ENCODE measurements at regions of chr13 and their contacts with region 1.

Region 1: GRCh38 chr13:99501184-99501847 is at the start of gene TM9SF2:
- DNase-seq: peak; percentile 98 to 99
- ATAC-seq: peak; percentile 92
- H3K4me3 ChIP-seq: peak within 1 kb of the TSS; percentile 78 to 84
- H3K27ac ChIP-seq: peak within 1 kb of the TSS in 1 of 2 donors; percentile 60
- H3K4me1 ChIP-seq: peaks cover 2 to 3% of the 10 kb centered on the region in 2 donors
- H3K27me3 ChIP-seq: no peaks in the 10 kb centered on the region
- total RNA-seq, gene TM9SF2: 74.5 to 93.3 TPM

Region 2: DNA sequence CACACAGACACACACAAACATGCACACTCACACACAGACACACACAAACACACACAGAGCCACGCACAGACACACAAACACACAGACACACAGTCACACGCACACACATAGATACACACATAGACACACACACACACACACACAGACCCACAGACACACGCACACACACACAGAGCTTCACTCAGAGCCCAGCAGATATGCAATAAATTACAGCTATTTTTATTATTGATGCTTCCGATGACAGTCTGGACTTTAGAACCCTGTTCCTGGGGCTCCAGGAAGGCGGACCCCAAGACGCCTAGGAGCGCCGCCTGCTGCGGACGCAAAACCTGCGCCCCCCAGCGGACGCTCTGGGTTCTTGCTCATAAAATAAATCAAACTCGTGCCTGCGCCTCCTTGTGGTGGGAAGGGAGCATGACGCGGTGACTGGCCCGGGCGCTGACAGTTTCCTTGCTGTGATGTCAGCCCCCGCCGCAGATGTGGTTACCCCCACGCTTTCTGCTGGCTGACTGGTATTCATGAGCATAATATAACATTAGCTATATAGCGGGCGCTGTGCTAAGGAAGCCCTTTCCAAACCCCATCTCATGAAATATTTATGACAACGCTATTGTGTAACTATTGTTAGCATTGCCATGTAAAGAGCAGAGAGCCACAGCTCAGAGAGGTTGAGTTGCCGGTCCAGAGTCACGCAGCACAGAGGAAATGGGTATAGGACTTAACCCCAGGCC is 64.5 kb before region 1 on chr13:
- intact Hi-C with region 1: loop called (anchors 5 kb)
- DNase-seq: peak; percentile 91 to 95
- ATAC-seq: peak; percentile 85
- H3K4me3 ChIP-seq: no peak overlapping the region
- H3K27ac ChIP-seq: no peak overlapping the region
- H3K4me1 ChIP-seq: no peaks in the 10 kb centered on the region
- H3K27me3 ChIP-seq: no peaks in the 10 kb centered on the region

Region 3: GRCh38 chr13:99442273-99442895 is 58.9 kb before region 1 on chr13:
- intact Hi-C with region 1: loop called (anchors 5 kb)
- DNase-seq: no peak
- ATAC-seq: peak; percentile 84
- H3K4me3 ChIP-seq: no peak overlapping the region
- H3K27ac ChIP-seq: no peak overlapping the region
- H3K4me1 ChIP-seq: no peaks in the 10 kb centered on the region
- H3K27me3 ChIP-seq: no peaks in the 10 kb centered on the region

Region 4: DNA sequence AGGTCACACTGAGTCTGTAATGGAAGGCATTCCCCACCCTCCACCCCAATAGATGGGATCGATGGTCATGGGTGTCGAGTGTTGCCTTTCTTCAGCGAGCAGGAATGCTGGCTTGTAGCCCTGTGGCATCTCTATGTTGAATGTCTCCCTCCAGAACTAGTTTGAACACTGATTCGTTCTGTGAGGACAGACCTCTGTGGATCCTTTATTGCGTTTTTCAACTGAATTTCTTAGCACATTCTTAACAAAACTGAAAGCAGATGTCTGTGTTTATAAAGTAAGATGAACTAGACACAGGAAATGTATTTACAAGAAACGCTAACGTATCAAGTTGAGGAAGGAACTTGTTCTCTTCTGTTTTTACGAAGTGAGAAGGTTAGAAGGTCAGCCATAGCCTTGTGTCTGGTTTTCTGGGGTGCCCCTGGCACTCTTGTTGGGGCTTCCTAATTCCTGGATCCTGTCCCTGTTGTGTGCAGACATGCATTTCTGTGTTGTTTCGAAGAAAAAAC is 36.8 kb before region 1 on chr13:
- intact Hi-C with region 1: no loop called
- DNase-seq: no peak
- ATAC-seq: no peak
- H3K4me3 ChIP-seq: no peak overlapping the region
- H3K27ac ChIP-seq: no peak overlapping the region
- H3K4me1 ChIP-seq: no peaks in the 10 kb centered on the region
- H3K27me3 ChIP-seq: no peaks in the 10 kb centered on the region

Region 5: DNA sequence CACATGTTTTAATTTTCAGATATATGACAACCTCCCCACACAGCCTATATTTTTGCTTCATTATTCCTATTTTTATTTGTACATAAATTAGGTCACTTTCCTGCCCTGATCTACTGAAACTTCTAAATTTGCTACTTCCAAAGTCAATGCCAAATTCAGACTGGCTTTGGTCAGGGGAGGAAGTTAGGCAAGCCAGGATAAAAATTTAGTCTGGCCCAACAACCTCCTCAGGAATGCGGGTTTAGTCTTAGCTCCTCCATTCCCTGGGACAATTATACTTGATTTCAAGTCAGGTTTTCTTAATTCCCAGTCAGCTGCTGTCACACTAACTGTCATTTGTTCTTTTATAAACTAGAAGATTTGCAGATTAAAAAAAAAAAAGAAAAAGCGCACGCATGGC is 84.3 kb after region 1 on chr13:
- intact Hi-C with region 1: loop called in 1 of 2 experiments (anchors 10 kb)
- DNase-seq: no peak
- ATAC-seq: peak; percentile 68
- H3K4me3 ChIP-seq: no peak overlapping the region
- H3K27ac ChIP-seq: no peak overlapping the region
- H3K4me1 ChIP-seq: no peaks in the 10 kb centered on the region
- H3K27me3 ChIP-seq: no peaks in the 10 kb centered on the region

Region 6: GRCh38 chr13:100069278-100069677 is 568.0 kb after region 1 on chr13:
- intact Hi-C with region 1: no loop called
- DNase-seq: no peak
- ATAC-seq: no peak
- H3K4me3 ChIP-seq: no peak overlapping the region
- H3K27ac ChIP-seq: no peak overlapping the region
- H3K4me1 ChIP-seq: no peaks in the 10 kb centered on the region
- H3K27me3 ChIP-seq: no peaks in the 10 kb centered on the region